Left ventricle myocardium superior (tissue), 1 donor: ENCODE measurements at regions of chr2 and their contacts with region 1.

Region 1: DNA sequence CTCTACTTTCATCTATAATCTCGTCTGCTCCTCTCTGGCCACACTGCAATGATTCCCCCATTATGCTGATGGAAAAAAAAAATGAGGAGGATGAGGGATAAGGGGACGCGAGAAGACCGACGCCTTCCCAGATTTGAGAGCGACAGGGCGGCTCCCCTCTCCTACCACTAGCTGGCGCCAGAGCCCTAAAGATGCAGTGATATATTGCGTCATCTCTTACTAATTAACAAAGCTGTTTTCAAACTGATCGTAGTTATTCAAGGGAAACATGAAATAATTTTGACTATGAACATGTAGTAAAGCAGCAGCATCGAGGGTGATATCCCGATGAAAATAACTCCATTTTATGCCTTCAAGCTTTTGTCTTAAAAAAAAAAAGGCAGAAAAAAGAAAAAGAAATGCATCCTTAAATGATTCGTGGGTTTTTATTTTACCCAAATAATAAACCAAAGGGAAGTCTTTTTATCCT is 48.0 kb upstream of the HNRNPA3 start:
- DNase-seq: peak; percentile 88
- ATAC-seq: peak; percentile 92

Region 2: GRCh38 chr2:177263451-177264208 is 99.0 kb after region 1 on chr2:
- intact Hi-C with region 1: loop called (anchors 2 kb)
- DNase-seq: peak; percentile 100
- ATAC-seq: peak; percentile 76

Region 3: DNA sequence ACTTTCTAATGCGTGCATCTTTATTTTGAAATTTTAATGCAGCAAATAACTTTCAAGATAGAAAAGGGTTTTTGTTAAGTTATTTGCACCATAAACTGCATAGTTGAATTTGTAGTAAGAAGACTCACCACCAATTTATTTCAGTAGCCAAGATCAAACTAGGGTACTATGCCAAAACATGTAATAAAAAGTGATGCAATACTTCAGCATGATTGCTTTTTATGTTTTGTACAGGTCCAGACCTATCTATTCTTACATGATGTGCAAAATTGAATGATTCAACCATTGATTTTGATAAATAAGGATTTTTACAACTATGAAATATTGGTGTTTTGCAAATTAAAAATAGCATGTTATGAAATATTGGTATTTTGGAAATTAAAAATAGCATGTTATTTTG is 254.7 kb after region 1 on chr2:
- intact Hi-C with region 1: loop called (anchors 5 kb)
- DNase-seq: no peak
- ATAC-seq: no peak

Region 4: DNA sequence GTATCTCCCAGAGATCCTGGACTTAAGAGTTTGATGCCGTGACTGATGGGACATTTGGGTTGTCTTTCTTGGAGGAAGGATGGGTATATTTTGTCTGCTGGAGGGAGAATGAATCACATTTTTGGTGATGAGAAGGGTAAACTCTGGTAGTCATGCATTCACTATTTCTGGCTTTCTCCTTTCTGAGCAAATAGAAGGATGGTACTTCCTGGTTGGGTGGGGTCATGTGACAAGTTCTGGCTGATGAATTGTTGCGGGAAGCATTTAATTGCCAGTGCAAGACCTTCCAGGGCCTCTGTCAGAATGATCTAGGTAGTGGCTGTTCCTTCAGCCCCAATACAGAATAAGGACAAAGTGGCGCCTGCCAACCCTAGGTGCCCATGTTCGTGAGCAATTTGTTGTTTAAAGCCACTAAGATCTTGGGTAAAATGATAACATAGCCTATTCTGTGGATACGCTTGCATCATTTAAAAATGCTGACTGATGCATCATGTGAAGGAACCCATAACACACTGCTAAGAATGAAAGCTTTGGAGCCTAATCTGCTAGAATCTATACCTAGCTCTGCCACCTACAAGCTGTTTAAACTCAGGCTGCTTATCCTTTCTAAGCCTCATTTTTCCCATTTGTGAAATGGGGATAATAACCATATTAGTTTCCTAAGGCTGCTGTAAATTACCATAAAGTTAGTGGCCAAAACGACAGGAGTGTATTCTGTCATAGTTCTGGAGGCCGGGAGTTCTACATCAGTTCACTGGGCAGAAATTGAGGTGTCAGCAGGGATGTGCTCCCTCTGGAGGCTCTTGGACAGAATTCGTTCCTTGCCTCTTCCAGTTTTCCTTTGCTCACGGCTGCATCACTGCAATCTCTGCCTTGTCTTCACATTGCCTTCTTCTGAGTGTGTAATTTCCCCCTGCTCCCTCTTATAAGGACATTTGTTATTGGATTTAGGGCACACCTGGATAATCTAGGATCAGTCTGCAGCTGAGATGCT is 509.3 kb after region 1 on chr2:
- intact Hi-C with region 1: no loop called
- DNase-seq: no peak
- ATAC-seq: no peak

Region 5: GRCh38 chr2:177724398-177725287 is 560.0 kb after region 1 on chr2:
- intact Hi-C with region 1: loop called (anchors 10 kb)
- DNase-seq: peak; percentile 43
- ATAC-seq: peak; percentile 54